ENCODE measurements at regions of chr5 and their contacts with region 1.

Region 1: GRCh38 chr5:151002250-151002649 is 18.1 kb upstream of the GPX3 start:
- DNase-seq: no peak

Region 2: GRCh38 chr5:150486402-150487198 is 515.6 kb before region 1 on chr5:
- intact Hi-C with region 1: no loop called
- DNase-seq: no peak

Region 3: DNA sequence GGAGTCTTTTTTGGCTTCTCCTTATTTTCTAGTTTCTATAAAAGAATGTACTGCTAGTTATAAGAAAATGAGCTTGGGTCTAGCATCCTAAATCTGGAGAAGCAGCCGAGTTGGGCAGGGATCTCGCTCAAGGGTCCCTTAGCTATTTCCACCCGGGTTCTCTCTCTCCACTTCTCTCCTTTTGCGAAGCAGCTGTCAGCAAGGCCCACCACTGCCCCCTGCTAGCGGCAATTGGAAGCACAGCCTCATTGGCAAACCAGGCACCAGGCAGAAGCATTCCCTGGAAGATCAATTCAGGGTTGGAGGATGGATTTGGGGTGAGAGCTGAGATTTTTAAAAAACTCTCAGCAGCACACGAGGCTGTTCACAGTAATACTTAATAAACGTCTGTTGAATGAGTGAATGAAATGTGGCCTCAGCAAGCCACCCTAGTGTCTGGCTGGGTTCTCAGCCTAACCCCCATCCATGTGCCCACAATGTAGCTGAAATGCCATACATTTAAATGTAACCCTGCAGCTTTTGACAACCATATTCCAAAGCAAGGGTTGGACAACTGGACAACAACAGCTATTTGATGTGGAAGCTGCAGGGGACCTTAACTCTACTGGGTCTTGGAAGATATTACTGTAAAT is 113.1 kb after region 1 on chr5:
- intact Hi-C with region 1: loop called (anchors 2 kb)
- DNase-seq: peak; percentile 92

Measured in cardiac septum (tissue), 1 donor.